AG04450 (cell line): ENCODE measurements at regions of chr1 and their contacts with region 1.

Region 1: DNA sequence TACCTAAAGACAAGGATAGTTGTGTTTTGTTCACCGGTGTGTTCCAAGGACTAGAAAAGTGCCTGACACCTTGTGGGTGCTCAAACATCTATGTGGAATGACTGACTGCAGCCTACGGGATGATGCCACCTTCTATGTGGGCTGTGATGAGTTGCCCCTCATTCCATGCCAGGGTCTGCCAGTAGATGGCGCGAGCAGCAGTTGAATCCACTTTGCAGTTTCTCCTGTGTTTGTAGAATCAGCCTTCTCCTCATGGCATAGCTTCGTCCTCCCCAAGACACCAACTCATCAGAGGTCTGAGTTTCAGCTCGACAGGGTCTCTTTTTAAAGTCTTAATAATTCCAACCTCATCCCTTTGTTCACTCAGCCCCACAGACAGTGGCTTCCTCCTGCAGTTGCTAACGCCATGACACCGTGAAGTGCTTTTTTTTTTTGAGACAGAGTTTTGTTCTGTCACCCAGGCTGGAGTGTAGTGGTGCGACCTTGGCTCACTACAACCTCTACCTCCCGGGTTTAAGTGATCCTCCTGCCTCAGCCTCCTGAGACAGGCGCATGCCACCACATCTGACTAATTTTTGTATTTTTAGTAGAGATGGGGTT is 133.7 kb downstream of the CAPN8 start:
- DNase-seq: peak; percentile 3
- H3K4me3 ChIP-seq: no peak overlapping the region
- H3K27ac ChIP-seq: no peak overlapping the region
- H3K27me3 ChIP-seq: peaks cover 19% of the 10 kb centered on the region
- CTCF ChIP-seq: peak; percentile 63

Region 2: DNA sequence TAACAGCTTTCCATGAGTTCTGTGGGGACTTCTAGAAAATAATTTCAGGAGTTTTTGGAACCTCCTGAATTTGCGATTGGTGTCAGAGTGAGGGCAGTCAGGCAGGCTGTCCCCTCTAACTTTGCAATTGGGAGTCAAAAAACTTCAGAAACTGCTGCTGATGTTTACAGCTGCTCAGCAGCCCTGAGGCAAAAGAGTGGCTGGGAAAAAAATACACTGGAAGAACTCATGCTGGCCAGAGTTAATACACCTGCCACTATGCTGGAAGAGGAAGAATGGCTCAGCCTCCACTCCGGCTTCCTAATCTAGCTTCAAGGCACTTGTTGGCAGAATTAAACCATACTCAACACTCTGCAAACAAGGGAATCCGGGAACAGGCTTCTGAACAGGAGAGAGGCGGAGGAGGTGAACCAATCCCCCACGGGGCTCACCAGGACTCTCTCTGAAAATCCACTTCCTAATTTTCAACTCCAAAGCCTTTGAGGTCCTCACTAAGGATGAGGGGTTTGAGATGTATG is 18.6 kb before region 1 on chr1:
- CTCF ChIA-PET with region 1: no interaction called
- POLR2A ChIA-PET with region 1: no interaction called
- DNase-seq: no peak
- H3K4me3 ChIP-seq: no peak overlapping the region
- H3K27ac ChIP-seq: no peak overlapping the region
- H3K27me3 ChIP-seq: peaks cover 19% of the 10 kb centered on the region
- CTCF ChIP-seq: no peak

Region 3: DNA sequence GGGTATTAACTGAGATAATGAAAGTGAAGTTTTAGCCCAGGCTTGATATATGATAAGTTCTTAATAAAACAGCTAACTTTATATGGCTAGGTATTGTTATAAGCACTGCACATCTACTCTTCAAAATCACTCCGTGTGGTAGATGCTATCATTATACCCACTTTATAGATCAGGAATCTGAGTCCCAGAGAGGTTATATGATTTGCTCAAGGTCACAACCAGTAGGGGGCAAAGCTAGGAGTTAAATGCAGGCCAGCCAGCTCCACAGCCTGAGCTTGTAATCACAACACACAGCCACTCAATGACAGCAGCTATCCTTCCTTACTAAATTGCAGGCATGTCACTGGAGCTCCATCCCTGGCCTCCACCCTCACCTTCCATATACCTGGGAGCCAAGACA is 17.9 kb after region 1 on chr1:
- CTCF ChIA-PET with region 1: no interaction called
- POLR2A ChIA-PET with region 1: no interaction called
- DNase-seq: no peak
- H3K4me3 ChIP-seq: no peak overlapping the region
- H3K27ac ChIP-seq: no peak overlapping the region
- H3K27me3 ChIP-seq: peaks cover 6% of the 10 kb centered on the region
- CTCF ChIP-seq: no peak

Region 4: GRCh38 chr1:223683586-223684487 is 152.0 kb after region 1 on chr1:
- CTCF ChIA-PET with region 1: interaction called, 10 read pairs
- POLR2A ChIA-PET with region 1: no interaction called
- DNase-seq: no peak
- H3K4me3 ChIP-seq: no peak overlapping the region
- H3K27ac ChIP-seq: no peak overlapping the region
- H3K27me3 ChIP-seq: peaks cover 17% of the 10 kb centered on the region
- CTCF ChIP-seq: peak; percentile 79